ENCODE measurements at regions of chr1 and their contacts with region 1.

Region 1: GRCh38 chr1:115982400-115982799 is 6.1 kb downstream of the SLC22A15 start:
- DNase-seq: no peak

Region 2: DNA sequence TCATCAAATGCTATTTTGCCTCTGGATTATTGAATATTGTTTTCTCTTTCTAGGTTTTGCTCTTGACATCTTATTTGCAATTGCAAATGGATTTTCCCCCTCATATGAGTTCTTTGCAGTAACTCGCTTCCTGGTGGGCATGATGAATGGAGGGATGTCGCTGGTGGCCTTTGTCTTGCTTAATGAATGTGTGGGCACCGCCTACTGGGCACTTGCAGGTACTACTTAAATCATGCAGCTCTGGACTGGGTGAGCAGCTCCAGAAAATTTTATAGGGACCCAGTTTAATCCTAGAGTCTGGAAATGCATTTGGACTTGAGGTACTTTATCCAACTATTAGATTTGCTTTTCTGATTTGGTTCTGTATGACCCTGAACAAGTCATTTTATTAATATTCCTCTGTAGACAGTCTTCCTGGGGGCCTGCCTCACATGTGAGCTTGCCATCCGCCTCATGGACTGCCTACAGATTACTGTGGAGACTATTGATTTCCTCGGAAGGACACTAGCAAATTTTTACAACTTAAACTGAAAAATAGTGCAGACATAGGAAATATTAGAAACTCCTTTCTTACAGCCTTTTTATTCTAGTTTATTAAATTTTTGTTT is 38.4 kb after region 1 on chr1:
- intact Hi-C with region 1: loop called in 1 of 2 experiments (anchors 1 kb)
- DNase-seq: no peak

Measured in posterior vena cava (tissue), 2 donors.